CD4-positive, alpha-beta T cell (primary cell): ENCODE measurements at regions of chr1 and their contacts with region 1.

Region 1: DNA sequence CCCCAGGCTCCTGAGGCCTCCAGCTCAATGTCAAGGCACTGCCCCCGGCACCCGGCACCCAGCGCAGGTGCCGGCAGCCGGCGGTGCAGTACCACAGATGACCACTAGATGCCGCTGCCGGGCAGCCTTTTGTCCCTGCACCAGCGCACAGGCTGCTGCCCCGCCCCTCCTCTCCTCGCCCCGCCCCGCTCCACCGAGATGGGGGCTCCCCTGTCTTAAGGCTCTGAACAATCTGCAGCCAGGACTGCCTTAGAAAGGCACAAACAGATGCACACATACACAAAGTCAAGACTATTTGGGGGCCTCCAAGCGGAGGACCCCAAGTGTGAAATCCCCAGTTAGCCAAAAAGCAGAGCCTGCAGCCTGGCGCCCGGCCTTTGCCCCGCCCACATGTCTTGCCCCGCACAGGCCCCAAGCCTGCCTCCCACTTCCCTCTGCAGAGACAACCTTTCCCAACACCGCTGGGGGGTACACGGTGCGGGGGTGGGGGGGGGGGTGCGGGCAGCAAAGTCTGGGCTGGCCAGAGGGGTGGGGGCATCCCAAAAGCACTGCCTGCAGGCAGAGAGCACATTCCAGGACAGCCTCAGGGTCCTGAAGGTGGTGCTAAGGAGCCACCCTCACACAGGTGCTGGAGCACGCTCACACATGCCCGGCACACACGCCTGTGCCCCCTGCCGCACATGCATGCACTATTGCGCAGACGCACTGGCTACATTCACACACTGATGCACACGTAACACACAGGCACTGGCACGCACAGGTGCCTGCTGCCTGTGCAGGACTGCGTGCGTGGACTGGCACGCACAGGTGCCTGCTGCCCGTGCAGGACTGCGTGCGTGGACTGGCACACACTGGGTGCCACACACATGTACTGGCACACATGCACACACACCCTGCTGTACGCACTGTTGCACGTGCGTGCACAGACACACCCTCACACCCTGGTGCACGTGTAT is 37.1 kb downstream of the ARHGEF16 start:
- DNase-seq: peak; percentile 77 to 91 (median 84)
- ATAC-seq: peak; percentile 100
- H3K4me3 ChIP-seq: no peak overlapping the region
- H3K4me3 Mint-ChIP-seq: no peak overlapping the region
- H3K27ac ChIP-seq: no peak overlapping the region
- H3K27ac Mint-ChIP-seq: no peak overlapping the region
- H3K4me1 ChIP-seq: peaks cover 10% of the 10 kb centered on the region
- H3K4me1 Mint-ChIP-seq: peaks cover 6% of the 10 kb centered on the region
- H3K27me3 ChIP-seq: no peaks in the 10 kb centered on the region
- H3K27me3 Mint-ChIP-seq: no peaks in the 10 kb centered on the region
- CTCF ChIP-seq: peak; percentile 99

Region 2: DNA sequence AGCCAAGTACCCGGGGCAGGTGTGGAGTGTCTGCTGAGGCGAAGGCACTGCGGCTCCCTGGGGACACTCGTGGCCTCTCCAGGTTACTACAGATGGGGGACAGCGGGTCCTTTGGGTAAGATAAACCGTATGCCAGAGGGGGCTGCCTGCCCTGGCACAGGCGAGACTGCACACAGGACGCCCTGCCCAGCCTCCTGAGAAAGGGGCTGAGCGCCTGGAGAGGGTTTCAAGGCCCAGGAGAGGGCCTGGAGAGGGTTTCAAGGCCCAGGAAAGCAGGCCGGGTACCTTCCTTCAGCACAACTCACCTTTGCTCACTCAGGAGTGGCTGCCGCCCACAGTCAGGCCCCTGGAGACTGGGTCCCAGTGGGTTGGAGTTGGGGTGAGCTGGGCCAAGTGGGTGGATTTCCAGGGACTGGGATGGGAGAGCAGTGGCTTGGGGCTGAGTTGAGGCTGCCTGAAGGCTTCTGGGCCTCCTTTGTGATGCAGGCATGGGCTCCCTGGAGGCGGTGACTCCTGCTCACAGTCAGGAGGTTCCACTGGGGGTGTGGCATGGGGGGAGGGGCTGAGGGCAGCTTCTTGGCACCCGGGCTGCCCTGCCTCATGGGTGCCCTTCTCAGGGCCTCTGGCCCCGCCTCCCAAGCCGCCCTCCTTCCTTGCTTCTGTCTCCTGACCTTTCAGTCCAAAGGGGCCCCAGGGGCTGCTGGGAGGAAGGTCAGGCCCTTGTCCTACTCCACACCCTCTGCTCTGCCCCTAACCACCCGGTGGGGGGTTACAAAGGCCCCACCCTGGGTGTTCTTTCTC is 858.8 kb before region 1 on chr1 and contains the start of gene MMEL1:
- CTCF ChIA-PET with region 1: no interaction called
- POLR2A ChIA-PET with region 1: no interaction called
- intact Hi-C with region 1: loop called in 1 of 2 experiments (anchors 5 kb)
- DNase-seq: no peak
- ATAC-seq: no peak
- H3K4me3 ChIP-seq: no peak within 1 kb of the TSS
- H3K4me3 Mint-ChIP-seq: no peak within 1 kb of the TSS
- H3K27ac ChIP-seq: no peak within 1 kb of the TSS
- H3K27ac Mint-ChIP-seq: no peak within 1 kb of the TSS
- H3K4me1 ChIP-seq: peaks cover 15% of the 10 kb centered on the region
- H3K4me1 Mint-ChIP-seq: no peaks in the 10 kb centered on the region
- H3K27me3 ChIP-seq: peaks cover 20% of the 10 kb centered on the region in 2 experiments
- H3K27me3 Mint-ChIP-seq: peaks cover 27% of the 10 kb centered on the region
- CTCF ChIP-seq: no peak
- total RNA-seq, gene MMEL1: 0.67 to 1.8 TPM

Region 3: DNA sequence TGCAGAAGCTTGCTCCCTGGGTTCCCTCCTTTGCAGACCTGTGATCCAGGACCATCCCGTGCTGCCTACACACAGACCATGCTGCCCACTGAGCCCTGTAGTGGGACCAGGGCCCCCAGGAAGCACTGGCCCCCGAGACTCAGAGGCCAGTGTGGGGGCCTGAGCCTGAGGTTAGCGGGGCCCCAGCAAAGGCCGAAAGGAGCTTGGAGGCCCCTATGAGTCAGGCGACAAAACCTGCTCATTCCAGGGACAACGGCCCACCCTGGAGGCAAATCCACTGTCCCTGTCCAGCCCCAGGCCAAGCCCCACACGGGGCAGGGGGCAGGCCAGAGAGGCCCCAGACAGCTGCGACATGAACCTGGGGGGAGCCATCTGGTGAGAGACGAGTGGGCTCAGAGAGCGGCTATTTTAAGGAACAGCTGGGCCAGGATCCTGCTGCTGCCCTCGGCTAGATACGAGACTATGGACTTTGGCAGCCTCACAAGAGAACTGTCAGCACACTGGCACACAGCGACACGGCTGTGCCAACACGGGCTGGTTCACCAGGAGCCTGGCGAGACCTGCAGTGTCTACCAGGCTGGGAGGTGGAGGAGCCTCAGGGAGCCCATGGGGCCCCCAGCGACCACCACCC is 37.6 kb after region 1 on chr1:
- CTCF ChIA-PET with region 1: interaction called, 3 read pairs
- POLR2A ChIA-PET with region 1: interaction called, 4 read pairs
- intact Hi-C with region 1: loop called in 1 of 2 experiments (anchors 2 kb)
- DNase-seq: no peak
- ATAC-seq: no peak
- H3K4me3 ChIP-seq: no peak overlapping the region
- H3K4me3 Mint-ChIP-seq: peak overlapping the region; percentile 84
- H3K27ac ChIP-seq: no peak overlapping the region
- H3K27ac Mint-ChIP-seq: no peak overlapping the region
- H3K4me1 ChIP-seq: peaks cover 18% of the 10 kb centered on the region
- H3K4me1 Mint-ChIP-seq: peaks cover 32% of the 10 kb centered on the region
- H3K27me3 ChIP-seq: no peaks in the 10 kb centered on the region
- H3K27me3 Mint-ChIP-seq: no peaks in the 10 kb centered on the region
- CTCF ChIP-seq: no peak

Region 4: GRCh38 chr1:3618881-3619671 is 127.5 kb after region 1 on chr1:
- CTCF ChIA-PET with region 1: interaction called, 12 read pairs
- POLR2A ChIA-PET with region 1: interaction called, 5 read pairs
- intact Hi-C with region 1: loop called (anchors 1 kb)
- DNase-seq: peak; percentile 58 to 90 (median 72)
- ATAC-seq: peak; percentile 96
- H3K4me3 ChIP-seq: no peak overlapping the region
- H3K4me3 Mint-ChIP-seq: peak overlapping the region; percentile 49
- H3K27ac ChIP-seq: no peak overlapping the region
- H3K27ac Mint-ChIP-seq: peak overlapping the region; percentile 8
- H3K4me1 ChIP-seq: peaks cover 29% of the 10 kb centered on the region
- H3K4me1 Mint-ChIP-seq: peaks cover 41% of the 10 kb centered on the region
- H3K27me3 ChIP-seq: peaks cover 0 to 2% of the 10 kb centered on the region in 2 experiments
- H3K27me3 Mint-ChIP-seq: peaks cover 14% of the 10 kb centered on the region
- CTCF ChIP-seq: peak; percentile 76

Region 5: GRCh38 chr1:3727042-3727824 is 235.7 kb after region 1 on chr1:
- CTCF ChIA-PET with region 1: no interaction called
- POLR2A ChIA-PET with region 1: no interaction called
- intact Hi-C with region 1: loop called (anchors 2 kb)
- DNase-seq: peak in 1 of 14 experiments; percentile 16
- ATAC-seq: no peak
- H3K4me3 ChIP-seq: no peak overlapping the region
- H3K4me3 Mint-ChIP-seq: no peak overlapping the region
- H3K27ac ChIP-seq: no peak overlapping the region
- H3K27ac Mint-ChIP-seq: no peak overlapping the region
- H3K4me1 ChIP-seq: peaks cover 2% of the 10 kb centered on the region
- H3K4me1 Mint-ChIP-seq: peaks cover 5% of the 10 kb centered on the region
- H3K27me3 ChIP-seq: no peaks in the 10 kb centered on the region
- H3K27me3 Mint-ChIP-seq: peaks cover 16% of the 10 kb centered on the region
- CTCF ChIP-seq: no peak